GM13976 (cell line): ENCODE measurements at regions of chr3 and their contacts with region 1.

Region 1: DNA sequence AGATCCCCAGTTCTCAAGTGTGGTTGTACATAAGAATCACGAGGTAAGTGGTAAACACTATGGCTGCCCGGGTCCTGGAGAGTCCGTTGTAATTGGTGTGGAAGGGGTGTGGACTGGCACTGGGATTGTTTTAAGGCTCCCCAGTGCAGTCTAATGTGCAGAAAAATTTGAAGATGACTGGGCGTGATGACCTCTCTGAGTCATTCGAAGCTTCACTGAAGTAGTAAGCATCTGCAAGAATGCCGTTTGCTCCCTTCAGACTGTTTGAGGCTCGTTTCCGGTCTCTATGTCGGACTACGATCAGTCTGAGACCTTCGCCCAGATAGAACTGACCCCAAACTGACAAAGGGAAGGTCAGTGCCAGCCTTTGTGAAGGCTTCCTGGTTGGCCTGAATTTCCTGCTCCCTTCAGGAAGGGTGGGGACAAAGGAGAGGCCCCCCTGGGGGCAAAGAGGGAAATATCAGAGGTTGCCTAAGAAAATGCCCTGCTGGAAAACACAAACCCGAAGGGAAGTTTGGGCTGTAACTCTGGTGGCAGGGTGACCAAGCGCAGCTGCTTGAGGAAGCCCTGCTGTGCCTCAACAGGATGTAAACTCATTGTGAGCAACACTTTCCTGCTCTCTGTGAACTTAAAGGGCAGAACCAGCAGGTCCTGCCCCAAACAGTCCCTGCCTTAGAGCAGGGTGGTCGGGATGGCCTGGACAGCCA is 34.6 kb downstream of the BTD start:
- DNase-seq: peak; percentile 40
- CTCF ChIP-seq: no peak

Region 2: GRCh38 chr3:15453806-15454625 is 182.1 kb before region 1 on chr3:
- in situ Hi-C with region 1: no loop called
- DNase-seq: no peak
- CTCF ChIP-seq: no peak

Region 3: GRCh38 chr3:15527031-15527459 is 109.1 kb before region 1 on chr3:
- in situ Hi-C with region 1: no loop called
- DNase-seq: no peak
- CTCF ChIP-seq: no peak

Region 4: GRCh38 chr3:15804553-15805095 is 168.5 kb after region 1 on chr3:
- in situ Hi-C with region 1: loop called (anchors 5 kb)
- DNase-seq: no peak
- CTCF ChIP-seq: no peak

Region 5: GRCh38 chr3:15899388-15899787 is 263.2 kb after region 1 on chr3:
- in situ Hi-C with region 1: no loop called
- DNase-seq: no peak
- CTCF ChIP-seq: no peak

Region 6: GRCh38 chr3:15997274-15997943 is 361.3 kb after region 1 on chr3:
- in situ Hi-C with region 1: no loop called
- DNase-seq: peak; percentile 50
- CTCF ChIP-seq: no peak